ENCODE measurements at regions of chr12 and their contacts with region 1.

Region 1: GRCh38 chr12:96578526-96579125 is 89.2 kb downstream of the CFAP54 start:
- DNase-seq: no peak
- H3K4me3 Mint-ChIP-seq: no peak overlapping the region
- H3K27ac Mint-ChIP-seq: no peak overlapping the region
- H3K4me1 Mint-ChIP-seq: no peaks in the 10 kb centered on the region
- H3K27me3 Mint-ChIP-seq: peaks cover 4% of the 10 kb centered on the region

Region 2: DNA sequence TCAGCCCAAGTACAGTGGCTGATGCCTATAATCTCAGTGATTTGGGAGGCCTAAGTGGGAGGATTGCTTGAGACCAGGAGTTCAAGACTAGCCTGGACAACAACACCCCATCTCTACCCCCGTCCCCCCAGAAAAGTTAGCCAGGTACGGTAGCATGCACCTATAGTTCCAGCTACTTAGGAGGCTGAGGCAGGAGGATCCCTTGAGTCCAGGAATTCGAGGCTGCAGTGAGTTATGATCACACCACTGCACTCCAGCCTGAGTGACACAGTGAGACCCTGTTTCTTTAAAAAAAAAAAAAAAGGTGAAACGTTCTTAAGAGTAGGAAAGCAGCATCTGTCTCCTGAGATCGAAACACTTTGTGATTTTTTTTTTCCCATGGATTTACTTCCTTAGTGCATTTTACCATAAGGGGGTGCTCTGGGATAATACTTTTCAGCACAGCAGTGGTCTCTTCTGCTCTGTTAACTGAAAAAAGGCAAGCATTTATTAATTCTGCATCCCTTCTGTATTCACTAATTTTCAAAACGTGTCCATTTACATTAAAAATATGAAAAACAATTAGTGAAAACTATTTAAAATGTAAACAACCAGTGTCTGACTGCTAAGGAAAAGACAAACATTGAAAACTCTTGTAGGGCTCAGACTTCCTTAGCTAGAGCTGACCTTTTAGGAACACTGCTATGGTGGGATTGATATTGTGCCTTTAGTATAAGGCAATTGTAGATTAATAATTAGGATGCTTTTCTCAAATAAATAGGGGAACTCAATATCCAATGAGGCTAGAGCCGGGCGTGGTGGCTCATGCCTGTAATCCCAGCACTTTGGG is 996.2 kb before region 1 on chr12:
- CTCF ChIA-PET with region 1: no interaction called
- POLR2A ChIA-PET with region 1: no interaction called
- DNase-seq: no peak
- H3K4me3 Mint-ChIP-seq: no peak overlapping the region
- H3K27ac Mint-ChIP-seq: no peak overlapping the region
- H3K4me1 Mint-ChIP-seq: no peaks in the 10 kb centered on the region
- H3K27me3 Mint-ChIP-seq: peaks cover 10% of the 10 kb centered on the region

Region 3: GRCh38 chr12:96617178-96617577 is 38.6 kb after region 1 on chr12:
- CTCF ChIA-PET with region 1: no interaction called
- POLR2A ChIA-PET with region 1: no interaction called
- DNase-seq: no peak
- H3K4me3 Mint-ChIP-seq: no peak overlapping the region
- H3K27ac Mint-ChIP-seq: no peak overlapping the region
- H3K4me1 Mint-ChIP-seq: no peaks in the 10 kb centered on the region
- H3K27me3 Mint-ChIP-seq: peaks cover 3% of the 10 kb centered on the region

Region 4: GRCh38 chr12:96811083-96811482 is 232.5 kb after region 1 on chr12:
- CTCF ChIA-PET with region 1: no interaction called
- POLR2A ChIA-PET with region 1: no interaction called
- DNase-seq: no peak
- H3K4me3 Mint-ChIP-seq: no peak overlapping the region
- H3K27ac Mint-ChIP-seq: no peak overlapping the region
- H3K4me1 Mint-ChIP-seq: no peaks in the 10 kb centered on the region
- H3K27me3 Mint-ChIP-seq: peaks cover 2% of the 10 kb centered on the region

Region 5: DNA sequence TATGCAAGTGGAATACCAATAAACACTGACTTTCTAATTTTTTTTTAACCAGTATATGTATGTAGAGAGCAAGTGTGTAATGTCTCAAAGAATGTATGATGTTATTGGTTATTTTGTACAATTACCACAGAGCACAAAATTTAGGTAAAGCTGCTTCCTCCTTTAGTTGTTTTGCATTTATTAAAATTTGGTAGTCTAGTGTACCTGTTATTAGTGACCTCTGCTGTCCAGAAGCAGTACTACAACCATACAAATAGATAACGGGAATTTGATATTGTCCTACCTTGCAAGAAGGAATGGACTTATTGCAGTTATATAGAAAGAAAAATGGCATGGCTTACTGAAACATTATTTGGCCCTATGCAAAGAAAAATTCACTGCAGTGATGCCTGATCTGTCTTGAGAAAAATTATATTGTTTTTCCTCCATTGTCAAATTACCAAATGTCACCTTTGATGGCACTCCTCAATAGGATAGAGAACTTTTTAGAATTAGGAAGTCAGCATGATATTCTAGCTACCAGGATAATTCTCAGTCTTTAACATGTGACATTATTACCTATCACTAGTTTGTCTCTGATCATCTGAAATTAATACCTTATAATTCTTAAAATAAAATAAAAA is 730.1 kb after region 1 on chr12:
- CTCF ChIA-PET with region 1: interaction called, 10 read pairs
- POLR2A ChIA-PET with region 1: no interaction called
- DNase-seq: no peak
- H3K4me3 Mint-ChIP-seq: no peak overlapping the region
- H3K27ac Mint-ChIP-seq: no peak overlapping the region
- H3K4me1 Mint-ChIP-seq: no peaks in the 10 kb centered on the region
- H3K27me3 Mint-ChIP-seq: peaks cover 9% of the 10 kb centered on the region

Measured in activated CD4-positive, alpha-beta memory T cell treated with anti-CD3 and anti-CD28 coated beads, Interleukin-2, amount 10 ng/mL, durations not matched to agents 7 days and 5 days (primary cell).